ENCODE measurements at regions of chr11 and their contacts with region 1.

Region 1: DNA sequence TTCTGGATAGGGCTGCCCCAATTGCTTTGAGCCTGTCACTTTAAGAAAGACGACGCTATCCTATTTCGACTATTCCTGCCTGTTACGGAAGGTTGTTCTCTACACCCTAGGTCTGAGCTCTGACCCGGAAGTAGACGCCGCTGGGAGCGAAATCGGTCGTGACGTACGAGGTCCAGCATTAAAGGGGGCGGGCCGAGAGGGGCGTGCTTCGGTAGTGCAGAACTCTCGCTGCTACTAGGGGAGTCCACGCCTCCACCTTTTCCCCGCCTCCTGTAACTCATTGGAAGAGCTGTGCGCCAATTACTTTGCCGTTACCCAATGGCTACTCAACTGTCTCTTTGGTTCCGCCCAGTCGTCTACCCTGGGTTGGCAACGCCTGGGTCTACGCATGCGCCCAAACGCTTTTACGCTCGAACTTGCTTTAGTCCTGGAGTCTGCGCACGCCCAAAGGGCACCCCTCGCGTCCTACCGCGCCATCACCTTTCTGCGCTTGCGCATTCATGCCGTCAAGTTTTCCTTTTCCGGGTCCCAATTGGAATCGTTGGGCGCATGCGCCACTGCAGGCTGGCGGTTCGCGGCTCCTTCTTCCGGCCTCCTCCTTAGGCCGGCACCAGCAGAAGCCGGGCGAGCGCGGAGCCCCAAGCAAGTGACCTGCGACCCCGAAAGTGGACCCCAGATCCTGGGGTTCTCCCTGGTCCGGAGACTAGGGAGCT is at the start of gene PCNX3:
- DNase-seq: peak; percentile 100
- H3K4me3 ChIP-seq: peak within 1 kb of the TSS; percentile 75 to 84 (median 81)
- H3K27ac ChIP-seq: peak within 1 kb of the TSS; percentile 91
- H3K4me1 ChIP-seq: peaks cover 30% of the 10 kb centered on the region
- H3K27me3 ChIP-seq: no peaks in the 10 kb centered on the region
- CTCF ChIP-seq: no peak
- total RNA-seq, gene PCNX3: 29.7 to 46.8 TPM

Region 2: DNA sequence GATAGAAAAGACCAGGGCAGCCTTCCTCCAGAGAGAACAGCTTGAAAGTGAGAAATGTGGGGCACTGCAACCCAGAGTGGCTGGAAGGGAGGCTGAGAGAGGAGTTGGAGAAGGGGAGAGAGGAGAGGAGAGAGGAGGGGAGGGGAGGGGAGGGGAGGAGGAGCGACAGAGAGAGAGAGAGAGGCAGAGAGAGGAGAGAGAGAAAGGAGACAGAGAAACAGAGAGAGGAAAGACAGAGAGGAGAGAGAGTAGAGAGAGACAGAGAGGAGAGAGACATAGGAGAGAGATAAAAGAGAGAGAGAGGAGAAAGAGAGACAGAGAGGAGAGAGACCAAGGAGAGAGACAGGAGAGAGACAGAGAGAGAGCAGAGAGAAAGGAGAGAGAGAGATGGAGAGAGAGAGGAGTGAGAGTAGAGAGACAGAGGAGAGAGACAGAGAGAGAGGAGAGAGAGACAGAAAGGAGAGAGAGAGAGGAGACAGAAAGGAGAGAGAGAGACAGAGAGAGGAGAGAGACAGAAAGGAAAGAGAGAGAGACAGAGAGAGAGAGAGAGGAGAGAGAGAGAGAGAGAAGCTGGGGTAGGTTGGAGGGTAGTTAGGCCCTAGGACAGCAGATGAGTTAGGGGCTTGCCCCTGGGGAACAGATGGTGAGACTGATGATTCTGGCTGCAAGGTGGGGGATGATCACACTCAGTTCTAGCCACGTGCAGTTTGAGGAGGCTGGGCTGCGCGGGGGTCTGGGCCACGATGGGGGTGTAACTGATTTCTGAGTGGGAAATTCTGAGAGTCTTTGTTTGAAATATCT is 99.0 kb before region 1 on chr11:
- CTCF ChIA-PET with region 1: no interaction called
- dilution Hi-C with region 1: no loop called
- in situ Hi-C with region 1: no loop called
- intact Hi-C with region 1: no loop called
- DNase-seq: no peak
- H3K4me3 ChIP-seq: no peak overlapping the region
- H3K27ac ChIP-seq: no peak overlapping the region
- H3K4me1 ChIP-seq: no peaks in the 10 kb centered on the region
- H3K27me3 ChIP-seq: no peaks in the 10 kb centered on the region
- CTCF ChIP-seq: no peak

Region 3: DNA sequence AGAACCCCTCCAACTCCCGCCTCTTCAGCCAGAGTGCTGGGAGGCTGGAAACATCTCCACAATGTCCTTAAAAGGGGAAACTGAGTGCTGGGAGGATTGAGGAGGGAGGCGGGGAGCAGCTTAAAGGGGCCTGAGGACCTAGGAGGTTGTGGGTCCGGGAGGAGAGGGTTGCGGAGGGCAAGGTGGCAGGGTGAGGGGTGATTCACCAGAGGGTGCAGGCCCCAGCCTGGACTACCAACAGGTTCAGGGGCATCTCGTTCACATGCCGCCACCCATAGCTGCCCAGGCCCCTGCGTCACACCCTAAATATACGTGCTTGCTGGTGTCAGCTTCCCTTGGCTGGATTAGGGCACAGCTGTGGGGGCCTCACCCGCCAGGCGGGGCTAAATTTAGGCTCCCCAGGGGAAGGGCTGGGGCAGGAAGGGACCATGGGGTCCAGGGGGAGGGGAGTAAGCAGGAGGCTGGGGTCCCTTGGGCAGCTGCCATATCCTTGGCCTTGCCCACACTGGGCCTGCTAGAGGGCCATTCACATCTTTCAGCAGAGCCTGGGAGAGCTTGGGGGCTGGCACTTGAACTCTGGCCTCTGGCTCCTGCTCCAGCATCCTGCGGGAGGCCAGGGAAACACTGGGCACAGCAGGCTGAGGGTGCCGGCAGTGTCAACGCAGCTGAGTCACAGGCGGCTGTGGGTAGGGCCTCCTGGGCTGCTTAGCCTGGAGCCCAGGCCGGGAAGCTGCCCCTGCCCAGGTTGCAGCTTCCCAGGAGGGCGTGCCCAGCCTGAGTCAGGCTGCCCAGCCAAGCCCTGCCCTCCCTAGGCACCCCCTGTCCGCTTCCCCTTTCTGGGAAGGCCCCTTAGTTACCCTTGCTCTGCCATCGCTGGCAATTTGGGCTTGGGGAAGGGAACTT is 38.3 kb before region 1 on chr11:
- CTCF ChIA-PET with region 1: interaction called, 7 read pairs
- dilution Hi-C with region 1: no loop called
- in situ Hi-C with region 1: no loop called
- intact Hi-C with region 1: loop called (anchors 1 kb)
- DNase-seq: peak; percentile 86
- H3K4me3 ChIP-seq: peak overlapping the region; percentile 49 to 68 (median 62)
- H3K27ac ChIP-seq: peak overlapping the region; percentile 29
- H3K4me1 ChIP-seq: peaks cover 46% of the 10 kb centered on the region
- H3K27me3 ChIP-seq: no peaks in the 10 kb centered on the region
- CTCF ChIP-seq: no peak

Region 4: DNA sequence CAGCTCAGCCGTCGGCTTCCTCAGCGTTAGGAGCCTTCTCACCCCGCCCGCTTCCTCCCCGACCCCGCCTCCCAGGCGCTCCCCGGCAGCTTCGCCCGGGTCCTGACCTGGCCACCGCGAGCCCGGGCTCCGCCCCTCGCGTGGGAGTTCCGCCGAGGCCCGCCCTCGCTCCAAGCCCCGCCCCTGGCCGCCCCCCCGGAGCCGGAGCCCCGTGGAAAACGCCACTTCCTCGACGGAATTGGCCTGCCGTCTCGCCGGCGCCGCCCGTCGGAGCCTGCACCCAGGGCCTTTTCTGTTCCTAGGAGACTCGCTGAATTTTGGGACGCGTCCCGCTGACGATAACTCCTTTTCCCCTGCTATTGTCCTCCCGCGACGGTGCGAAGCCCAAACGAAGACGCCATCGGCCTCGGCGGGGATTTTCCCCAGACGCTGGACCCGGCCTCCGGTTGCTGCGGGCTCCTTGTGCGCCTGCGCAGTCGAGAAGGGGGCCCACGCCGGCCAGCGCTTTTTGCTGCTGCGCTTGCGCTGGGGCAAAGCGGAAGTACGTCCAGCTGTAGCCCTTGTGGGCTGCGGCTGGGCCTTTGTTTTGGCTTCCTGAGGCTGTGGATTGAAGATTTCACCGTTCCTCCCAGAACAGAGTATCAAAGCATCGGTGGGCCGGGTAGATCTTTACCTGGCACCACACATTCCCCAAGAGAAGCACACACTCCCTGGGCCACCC is 37.3 kb after region 1 on chr11:
- CTCF ChIA-PET with region 1: no interaction called
- dilution Hi-C with region 1: no loop called
- in situ Hi-C with region 1: no loop called
- intact Hi-C with region 1: loop called (anchors 1 kb)
- DNase-seq: peak; percentile 77
- H3K4me3 ChIP-seq: peak overlapping the region; percentile 26 to 58 (median 47)
- H3K27ac ChIP-seq: peak overlapping the region; percentile 47
- H3K4me1 ChIP-seq: peaks cover 45% of the 10 kb centered on the region
- H3K27me3 ChIP-seq: no peaks in the 10 kb centered on the region
- CTCF ChIP-seq: no peak

Region 5: GRCh38 chr11:65662799-65663638 is 47.6 kb after region 1 on chr11 and contains the start of gene RELA:
- CTCF ChIA-PET with region 1: no interaction called
- dilution Hi-C with region 1: no loop called
- in situ Hi-C with region 1: no loop called
- intact Hi-C with region 1: loop called (anchors 2 kb)
- DNase-seq: peak; percentile 95
- H3K4me3 ChIP-seq: peak within 1 kb of the TSS; percentile 83 to 94 (median 86)
- H3K27ac ChIP-seq: peak within 1 kb of the TSS; percentile 82
- H3K4me1 ChIP-seq: peaks cover 17% of the 10 kb centered on the region
- H3K27me3 ChIP-seq: no peaks in the 10 kb centered on the region
- CTCF ChIP-seq: no peak
- total RNA-seq, gene RELA: 23.7 to 79.0 TPM

Region 6: GRCh38 chr11:65700391-65700790 is 85.0 kb after region 1 on chr11:
- CTCF ChIA-PET with region 1: no interaction called
- dilution Hi-C with region 1: no loop called
- in situ Hi-C with region 1: no loop called
- intact Hi-C with region 1: no loop called
- DNase-seq: no peak
- H3K4me3 ChIP-seq: no peak overlapping the region
- H3K27ac ChIP-seq: no peak overlapping the region
- H3K4me1 ChIP-seq: peaks cover 3% of the 10 kb centered on the region
- H3K27me3 ChIP-seq: peaks cover 3% of the 10 kb centered on the region
- CTCF ChIP-seq: no peak

Region 7: GRCh38 chr11:66119348-66120133 is 504.2 kb after region 1 on chr11:
- CTCF ChIA-PET with region 1: no interaction called
- dilution Hi-C with region 1: no loop called
- in situ Hi-C with region 1: no loop called
- intact Hi-C with region 1: no loop called
- DNase-seq: peak; percentile 77
- H3K4me3 ChIP-seq: no peak overlapping the region
- H3K27ac ChIP-seq: peak overlapping the region; percentile 54
- H3K4me1 ChIP-seq: peaks cover 18% of the 10 kb centered on the region
- H3K27me3 ChIP-seq: no peaks in the 10 kb centered on the region
- CTCF ChIP-seq: no peak

Measured in mammary epithelial cell (primary cell).